Caco-2 (cell line): ENCODE measurements at regions of chr16 and their contacts with region 1.

Region 1: DNA sequence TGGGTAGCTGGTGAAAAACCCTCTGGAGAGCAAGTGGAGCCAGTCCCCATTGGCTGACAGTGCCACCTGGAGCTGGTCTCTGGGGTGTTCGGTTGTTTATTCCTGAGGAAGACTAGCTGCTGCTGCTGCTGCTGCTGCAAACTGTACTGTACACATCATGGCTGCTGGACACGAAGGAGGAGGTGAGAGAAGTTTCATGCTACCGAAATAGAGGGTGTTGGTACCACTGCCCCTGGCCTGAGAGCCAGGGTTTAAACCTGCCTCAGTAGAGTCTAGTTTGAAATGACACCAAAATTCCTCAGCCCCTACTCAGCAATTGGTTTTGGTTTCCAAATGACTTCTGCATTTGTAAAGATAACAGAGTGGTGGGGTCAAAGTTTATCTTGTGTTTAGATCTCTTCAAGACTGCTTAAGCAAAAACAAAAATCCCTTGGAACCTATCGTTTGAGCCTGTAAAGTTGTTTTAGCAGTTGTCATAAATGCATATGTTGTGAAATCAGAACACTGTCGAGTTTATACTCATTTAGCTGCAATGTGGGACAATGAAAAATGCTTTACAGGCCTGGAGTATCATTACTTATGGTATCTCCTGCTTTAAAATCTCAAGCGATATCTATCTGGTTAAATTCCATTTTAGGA is 40.8 kb downstream of the CYB5B start:
- DNase-seq: peak; percentile 60 to 71
- H3K4me3 ChIP-seq: no peak overlapping the region
- H3K4me3 Mint-ChIP-seq: peak overlapping the region; percentile 57
- H3K27ac Mint-ChIP-seq: peak overlapping the region; percentile 76
- H3K4me1 ChIP-seq: peaks cover 50% of the 10 kb centered on the region
- H3K4me1 Mint-ChIP-seq: peaks cover 51% of the 10 kb centered on the region
- H3K27me3 ChIP-seq: no peaks in the 10 kb centered on the region
- H3K27me3 Mint-ChIP-seq: no peaks in the 10 kb centered on the region
- CTCF ChIP-seq: peak in 1 of 2 experiments; percentile 31

Region 2: GRCh38 chr16:69404275-69404805 is 60.9 kb before region 1 on chr16:
- CTCF ChIA-PET with region 1: interaction called, 5 read pairs
- POLR2A ChIA-PET with region 1: no interaction called
- intact Hi-C with region 1: loop called (anchors 1 kb)
- DNase-seq: peak; percentile 90 to 96
- H3K4me3 ChIP-seq: peak overlapping the region; percentile 21
- H3K4me3 Mint-ChIP-seq: peak overlapping the region; percentile 43
- H3K27ac Mint-ChIP-seq: peak overlapping the region; percentile 50
- H3K4me1 ChIP-seq: peaks cover 53% of the 10 kb centered on the region
- H3K4me1 Mint-ChIP-seq: peaks cover 48% of the 10 kb centered on the region
- H3K27me3 ChIP-seq: no peaks in the 10 kb centered on the region
- H3K27me3 Mint-ChIP-seq: no peaks in the 10 kb centered on the region
- CTCF ChIP-seq: no peak

Region 3: DNA sequence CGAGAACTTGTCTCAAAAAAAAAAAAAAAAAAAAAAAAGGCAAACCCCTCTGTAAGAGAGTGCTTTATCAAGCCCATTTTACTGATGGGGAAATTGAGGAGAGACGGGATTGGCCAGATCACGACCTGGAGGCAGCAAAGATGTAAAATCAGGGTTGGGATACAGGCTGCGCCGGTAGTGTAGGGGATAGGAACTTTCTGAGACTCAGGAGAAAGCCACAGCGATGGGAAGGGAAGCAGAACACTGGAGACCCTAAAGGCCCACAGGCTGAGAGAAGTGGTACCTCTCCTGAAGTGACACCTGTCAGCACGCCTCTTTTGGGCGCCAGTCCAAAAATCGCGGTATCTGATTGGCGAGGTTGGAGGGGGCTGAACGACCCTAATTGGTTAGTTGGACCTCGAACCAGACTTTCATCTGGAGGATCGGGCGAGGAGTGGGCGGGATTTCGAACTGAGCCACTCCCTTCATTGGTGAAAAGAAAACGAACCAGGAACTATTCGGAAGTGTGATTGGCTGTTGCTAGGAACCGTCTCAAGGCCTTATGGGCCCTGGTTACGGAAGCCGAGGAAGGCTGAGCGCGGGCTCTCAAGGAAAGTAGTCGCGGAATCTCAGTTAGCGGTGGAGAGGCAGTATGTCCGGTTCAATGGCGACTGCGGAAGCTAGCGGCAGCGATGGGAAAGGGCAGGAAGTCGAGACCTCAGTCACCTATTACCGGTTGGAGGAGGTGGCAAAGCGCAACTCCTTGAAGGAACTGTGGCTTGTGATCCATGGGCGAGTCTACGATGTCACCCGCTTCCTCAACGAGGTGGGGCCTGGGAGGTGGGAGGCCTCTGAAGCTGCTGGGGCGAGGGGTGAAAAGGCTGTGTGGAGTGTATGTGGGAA is 40.9 kb before region 1 on chr16 and contains the start of gene CYB5B:
- CTCF ChIA-PET with region 1: no interaction called
- POLR2A ChIA-PET with region 1: no interaction called
- intact Hi-C with region 1: loop called (anchors 1 kb)
- DNase-seq: peak; percentile 98 to 99
- H3K4me3 ChIP-seq: peak within 1 kb of the TSS; percentile 96
- H3K4me3 Mint-ChIP-seq: peak within 1 kb of the TSS; percentile 91
- H3K27ac Mint-ChIP-seq: peak within 1 kb of the TSS; percentile 93
- H3K4me1 ChIP-seq: peaks cover 14% of the 10 kb centered on the region
- H3K4me1 Mint-ChIP-seq: peaks cover 12% of the 10 kb centered on the region
- H3K27me3 ChIP-seq: no peaks in the 10 kb centered on the region
- H3K27me3 Mint-ChIP-seq: no peaks in the 10 kb centered on the region
- CTCF ChIP-seq: no peak
- total RNA-seq, gene CYB5B: 355 TPM in 2 replicates

Region 4: DNA sequence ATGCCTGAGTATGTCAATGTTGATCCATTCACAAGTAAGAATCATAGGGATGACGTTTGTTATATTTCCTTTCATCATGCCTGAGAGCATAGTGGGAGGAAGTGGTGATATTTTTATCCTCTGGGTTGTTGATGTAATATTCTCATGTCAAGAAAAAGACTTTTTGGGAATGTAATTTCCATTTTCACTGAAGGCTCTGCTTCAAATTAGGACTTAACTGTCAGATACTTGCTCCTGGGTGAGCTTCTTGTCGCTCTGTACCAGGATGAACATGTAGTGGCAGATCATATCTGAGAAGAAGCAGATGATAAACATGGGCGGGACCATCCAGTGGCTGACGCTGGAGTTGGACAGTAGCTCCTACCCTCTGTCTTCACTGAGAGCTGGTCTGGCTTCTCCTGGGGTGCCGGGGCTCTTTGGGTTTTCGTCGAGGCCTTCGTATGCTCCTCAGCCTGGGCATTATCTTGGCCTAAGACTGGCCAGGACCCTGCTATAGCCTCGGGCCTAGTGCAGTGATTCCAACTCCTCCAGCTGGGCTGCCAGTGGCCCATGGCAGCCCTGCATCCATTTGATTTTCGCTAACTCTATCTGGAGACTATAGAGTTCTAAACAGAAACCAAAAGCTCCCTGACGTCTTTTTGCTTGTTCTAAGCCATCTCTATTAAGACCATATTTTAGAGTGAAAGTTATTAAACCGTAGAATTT is 21.1 kb before region 1 on chr16:
- CTCF ChIA-PET with region 1: no interaction called
- POLR2A ChIA-PET with region 1: interaction called, 3 read pairs
- intact Hi-C with region 1: loop called (anchors 2 kb)
- DNase-seq: no peak
- H3K4me3 ChIP-seq: no peak overlapping the region
- H3K4me3 Mint-ChIP-seq: no peak overlapping the region
- H3K27ac Mint-ChIP-seq: peak overlapping the region; percentile 42
- H3K4me1 ChIP-seq: peaks cover 10% of the 10 kb centered on the region; the same call in 1 of the 2 replicates
- H3K4me1 Mint-ChIP-seq: peaks cover 15% of the 10 kb centered on the region
- H3K27me3 ChIP-seq: no peaks in the 10 kb centered on the region
- H3K27me3 Mint-ChIP-seq: no peaks in the 10 kb centered on the region
- CTCF ChIP-seq: no peak